ENCODE measurements at regions of chr2 and their contacts with region 1.

Region 1: GRCh38 chr2:135913727-135914365 is 37.6 kb upstream of the MCM6 start:
- DNase-seq: peak; percentile 74
- ATAC-seq: peak; percentile 41
- H3K4me3 ChIP-seq: no peak overlapping the region
- H3K4me3 Mint-ChIP-seq: no peak overlapping the region
- H3K27ac ChIP-seq: peak overlapping the region in 1 of 2 donors; percentile 46
- H3K27ac Mint-ChIP-seq: peak overlapping the region; percentile 46
- H3K4me1 ChIP-seq: no peaks in the 10 kb centered on the region
- H3K4me1 Mint-ChIP-seq: peaks cover 10% of the 10 kb centered on the region
- H3K27me3 ChIP-seq: no peaks in the 10 kb centered on the region
- H3K27me3 Mint-ChIP-seq: no peaks in the 10 kb centered on the region
- CTCF ChIP-seq: peak; percentile 96

Region 2: GRCh38 chr2:134657637-134658250 is 1256.1 kb before region 1 on chr2:
- CTCF ChIA-PET with region 1: no interaction called
- POLR2A ChIA-PET with region 1: no interaction called
- intact Hi-C with region 1: no loop called
- DNase-seq: peak; percentile 48
- ATAC-seq: no peak
- H3K4me3 ChIP-seq: no peak overlapping the region
- H3K4me3 Mint-ChIP-seq: no peak overlapping the region
- H3K27ac ChIP-seq: no peak overlapping the region
- H3K27ac Mint-ChIP-seq: no peak overlapping the region
- H3K4me1 ChIP-seq: peaks cover 0 to 8% of the 10 kb centered on the region in 2 donors
- H3K4me1 Mint-ChIP-seq: peaks cover 3% of the 10 kb centered on the region
- H3K27me3 ChIP-seq: no peaks in the 10 kb centered on the region
- H3K27me3 Mint-ChIP-seq: no peaks in the 10 kb centered on the region
- CTCF ChIP-seq: peak; percentile 52

Region 3: GRCh38 chr2:135803278-135803677 is 110.6 kb before region 1 on chr2:
- CTCF ChIA-PET with region 1: no interaction called
- POLR2A ChIA-PET with region 1: no interaction called
- intact Hi-C with region 1: no loop called
- DNase-seq: no peak
- ATAC-seq: no peak
- H3K4me3 ChIP-seq: no peak overlapping the region
- H3K4me3 Mint-ChIP-seq: no peak overlapping the region
- H3K27ac ChIP-seq: no peak overlapping the region
- H3K27ac Mint-ChIP-seq: no peak overlapping the region
- H3K4me1 ChIP-seq: no peaks in the 10 kb centered on the region
- H3K4me1 Mint-ChIP-seq: no peaks in the 10 kb centered on the region
- H3K27me3 ChIP-seq: no peaks in the 10 kb centered on the region
- H3K27me3 Mint-ChIP-seq: no peaks in the 10 kb centered on the region
- CTCF ChIP-seq: no peak

Region 4: DNA sequence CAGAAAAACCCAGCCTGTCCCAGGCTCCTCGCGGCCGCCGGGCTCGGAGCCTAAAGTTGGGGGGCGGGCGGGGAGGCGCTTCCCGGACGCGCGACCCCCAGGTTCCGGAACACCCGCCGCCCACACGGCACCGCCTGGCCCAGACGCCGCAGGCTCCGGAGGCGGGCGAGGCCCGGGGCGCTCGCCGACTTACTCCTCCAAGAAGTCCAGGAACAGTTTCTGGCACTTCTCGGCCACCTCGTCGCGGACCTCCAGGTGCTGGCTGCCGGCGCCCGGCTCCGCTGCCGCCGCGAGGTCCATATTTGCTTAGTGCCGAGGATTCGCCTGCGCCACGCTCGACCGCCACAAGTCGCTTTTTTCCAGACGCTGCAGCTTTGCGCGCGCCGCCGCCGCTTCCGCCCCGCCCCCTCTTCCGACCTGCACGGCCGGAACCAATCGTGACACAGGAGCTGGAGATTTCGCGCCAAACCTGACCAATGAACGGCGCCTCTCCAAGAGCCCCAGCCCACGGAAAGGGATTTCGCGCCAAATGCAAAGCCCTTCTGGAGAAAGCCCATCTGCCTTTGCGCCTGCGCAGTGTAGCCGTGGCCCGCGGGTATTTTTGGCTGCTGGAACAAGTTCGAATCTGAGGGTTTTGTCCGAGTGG is 37.7 kb before region 1 on chr2 and contains the start of gene MCM6:
- CTCF ChIA-PET with region 1: interaction called, 3 read pairs
- POLR2A ChIA-PET with region 1: no interaction called
- intact Hi-C with region 1: loop called (anchors 2 kb)
- DNase-seq: peak; percentile 96
- ATAC-seq: peak; percentile 92
- H3K4me3 ChIP-seq: peak within 1 kb of the TSS; percentile 68 to 80 (median 76)
- H3K4me3 Mint-ChIP-seq: peak within 1 kb of the TSS; percentile 95
- H3K27ac ChIP-seq: peak within 1 kb of the TSS; percentile 69 to 79
- H3K27ac Mint-ChIP-seq: peak within 1 kb of the TSS; percentile 94
- H3K4me1 ChIP-seq: peaks cover 8 to 23% of the 10 kb centered on the region in 2 donors
- H3K4me1 Mint-ChIP-seq: peaks cover 24% of the 10 kb centered on the region
- H3K27me3 ChIP-seq: no peaks in the 10 kb centered on the region
- H3K27me3 Mint-ChIP-seq: no peaks in the 10 kb centered on the region
- CTCF ChIP-seq: no peak
- total RNA-seq, gene MCM6: 29.6 and 30.0 TPM in 2 replicates

Region 5: DNA sequence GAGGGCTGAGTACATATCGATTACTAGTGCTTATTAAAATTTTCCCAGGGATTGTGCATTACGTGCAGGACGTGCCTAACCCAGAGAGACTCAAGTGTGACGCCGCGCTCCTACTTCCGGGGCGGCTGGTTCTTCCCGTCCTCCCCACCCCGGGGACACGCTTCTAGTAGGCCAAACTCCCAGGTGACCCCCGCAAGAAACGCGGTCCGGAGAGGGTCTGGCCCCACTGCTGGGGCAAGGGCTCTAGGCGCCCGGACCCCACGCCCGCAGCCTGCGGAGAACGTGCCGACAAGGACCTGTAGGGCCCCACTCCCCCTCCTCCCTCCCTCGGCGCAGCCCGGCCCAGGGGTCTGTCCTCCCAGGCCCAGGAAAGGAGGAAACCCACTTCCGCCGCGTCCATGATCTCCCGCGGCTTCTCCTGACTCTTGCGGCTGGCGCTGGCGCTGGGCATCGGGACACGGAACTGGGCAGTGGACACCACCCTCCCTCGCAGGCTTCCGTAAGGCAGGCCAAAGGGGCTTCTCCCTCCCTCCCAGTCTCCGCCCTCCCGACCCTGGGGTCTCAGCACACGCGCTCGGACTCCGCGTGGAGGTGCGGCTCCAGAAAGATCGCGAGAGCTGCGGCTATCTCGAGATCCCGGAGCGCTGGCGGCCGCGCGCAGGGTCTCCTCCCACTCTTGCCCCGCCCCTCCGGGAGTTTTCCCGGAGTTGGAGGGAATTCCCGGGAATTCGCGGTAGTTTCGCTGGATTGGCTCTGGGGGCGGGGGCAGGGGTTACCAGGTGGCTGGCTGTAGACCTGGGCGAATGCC is 71.4 kb after region 1 on chr2 and contains the start of gene DARS1:
- CTCF ChIA-PET with region 1: interaction called, 3 read pairs
- POLR2A ChIA-PET with region 1: no interaction called
- intact Hi-C with region 1: loop called (anchors 5 kb)
- DNase-seq: peak; percentile 91
- ATAC-seq: peak; percentile 84
- H3K4me3 ChIP-seq: peak within 1 kb of the TSS; percentile 75 to 99 (median 93)
- H3K4me3 Mint-ChIP-seq: peak within 1 kb of the TSS; percentile 97
- H3K27ac ChIP-seq: peak within 1 kb of the TSS; percentile 94 to 97
- H3K27ac Mint-ChIP-seq: peak within 1 kb of the TSS; percentile 98
- H3K4me1 ChIP-seq: peaks cover 29 to 31% of the 10 kb centered on the region in 2 donors
- H3K4me1 Mint-ChIP-seq: peaks cover 50% of the 10 kb centered on the region
- H3K27me3 ChIP-seq: no peaks in the 10 kb centered on the region
- H3K27me3 Mint-ChIP-seq: no peaks in the 10 kb centered on the region
- CTCF ChIP-seq: no peak
- total RNA-seq, gene DARS1: 88.3 and 92.0 TPM in 2 replicates

Region 6: GRCh38 chr2:136112317-136113208 is 198.7 kb after region 1 on chr2:
- CTCF ChIA-PET with region 1: interaction called, 13 read pairs
- POLR2A ChIA-PET with region 1: interaction called, 4 read pairs
- intact Hi-C with region 1: loop called (anchors 2 kb)
- DNase-seq: peak; percentile 48
- ATAC-seq: no peak
- H3K4me3 ChIP-seq: no peak overlapping the region
- H3K4me3 Mint-ChIP-seq: peak overlapping the region; percentile 98
- H3K27ac ChIP-seq: no peak overlapping the region
- H3K27ac Mint-ChIP-seq: peak overlapping the region; percentile 69
- H3K4me1 ChIP-seq: peaks cover 70 to 72% of the 10 kb centered on the region in 2 donors
- H3K4me1 Mint-ChIP-seq: peaks cover 74% of the 10 kb centered on the region
- H3K27me3 ChIP-seq: no peaks in the 10 kb centered on the region
- H3K27me3 Mint-ChIP-seq: no peaks in the 10 kb centered on the region
- CTCF ChIP-seq: no peak

Region 7: GRCh38 chr2:136378712-136379595 is 465.1 kb after region 1 on chr2:
- CTCF ChIA-PET with region 1: interaction called, 453 read pairs
- POLR2A ChIA-PET with region 1: interaction called, 11 read pairs
- intact Hi-C with region 1: loop called (anchors 1 kb)
- DNase-seq: peak; percentile 90
- ATAC-seq: peak; percentile 29
- H3K4me3 ChIP-seq: peak overlapping the region in 1 of 5 experiments; percentile 8
- H3K4me3 Mint-ChIP-seq: peak overlapping the region; percentile 49
- H3K27ac ChIP-seq: peak overlapping the region in 1 of 2 donors; percentile 71
- H3K27ac Mint-ChIP-seq: peak overlapping the region; percentile 97
- H3K4me1 ChIP-seq: peaks cover 61 to 65% of the 10 kb centered on the region in 2 donors
- H3K4me1 Mint-ChIP-seq: peaks cover 81% of the 10 kb centered on the region
- H3K27me3 ChIP-seq: no peaks in the 10 kb centered on the region
- H3K27me3 Mint-ChIP-seq: no peaks in the 10 kb centered on the region
- CTCF ChIP-seq: peak; percentile 88

Region 8: GRCh38 chr2:136665736-136666135 is 751.9 kb after region 1 on chr2:
- CTCF ChIA-PET with region 1: interaction called, 8 read pairs
- POLR2A ChIA-PET with region 1: no interaction called
- intact Hi-C with region 1: loop called (anchors 5 kb)
- DNase-seq: no peak
- ATAC-seq: no peak
- H3K4me3 ChIP-seq: no peak overlapping the region
- H3K4me3 Mint-ChIP-seq: no peak overlapping the region
- H3K27ac ChIP-seq: no peak overlapping the region
- H3K27ac Mint-ChIP-seq: no peak overlapping the region
- H3K4me1 ChIP-seq: no peaks in the 10 kb centered on the region
- H3K4me1 Mint-ChIP-seq: no peaks in the 10 kb centered on the region
- H3K27me3 ChIP-seq: no peaks in the 10 kb centered on the region
- H3K27me3 Mint-ChIP-seq: peaks cover 3% of the 10 kb centered on the region
- CTCF ChIP-seq: no peak

Measured in B cell (primary cell).